Activated CD4-positive, alpha-beta T cell treated with anti-CD3 and anti-CD28 coated beads for 36 hours (primary cell): ENCODE measurements at regions of chr20 and their contacts with region 1.

Region 1: GRCh38 chr20:21615617-21616080 is 89.8 kb upstream of the PAX1 start:
- DNase-seq: peak; percentile 73
- ATAC-seq: peak; percentile 53
- H3K4me3 Mint-ChIP-seq: no peak overlapping the region
- H3K27ac Mint-ChIP-seq: no peak overlapping the region
- H3K4me1 Mint-ChIP-seq: no peaks in the 10 kb centered on the region
- H3K27me3 Mint-ChIP-seq: peaks cover 32% of the 10 kb centered on the region

Region 2: GRCh38 chr20:20837574-20838021 is 778.1 kb before region 1 on chr20:
- CTCF ChIA-PET with region 1: no interaction called
- POLR2A ChIA-PET with region 1: no interaction called
- intact Hi-C with region 1: loop called in 1 of 2 experiments (anchors 10 kb)
- DNase-seq: peak; percentile 74
- ATAC-seq: no peak
- H3K4me3 Mint-ChIP-seq: no peak overlapping the region
- H3K27ac Mint-ChIP-seq: no peak overlapping the region
- H3K4me1 Mint-ChIP-seq: peaks cover 3% of the 10 kb centered on the region
- H3K27me3 Mint-ChIP-seq: peaks cover 8% of the 10 kb centered on the region

Region 3: DNA sequence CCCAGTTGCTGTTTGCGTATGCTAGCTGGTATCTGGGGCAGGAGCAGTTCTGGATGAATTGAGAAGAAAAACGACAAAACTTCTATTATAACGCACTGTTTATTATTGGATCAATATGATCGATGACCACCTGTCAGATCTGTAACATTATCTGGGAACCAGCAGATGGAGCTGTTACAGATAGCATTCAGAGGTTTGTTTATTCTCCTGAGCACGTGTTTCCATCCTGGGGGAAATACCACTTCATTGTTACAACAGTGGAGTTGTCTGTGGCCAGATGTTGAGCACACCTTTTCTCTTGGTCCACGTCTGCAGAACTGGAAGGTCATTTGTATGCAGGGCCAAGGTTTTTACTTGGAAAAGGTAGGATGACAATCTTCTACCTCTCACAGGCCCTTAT is 85.8 kb before region 1 on chr20:
- CTCF ChIA-PET with region 1: interaction called, 10 read pairs
- POLR2A ChIA-PET with region 1: no interaction called
- intact Hi-C with region 1: loop called (anchors 1 kb)
- DNase-seq: no peak
- ATAC-seq: no peak
- H3K4me3 Mint-ChIP-seq: no peak overlapping the region
- H3K27ac Mint-ChIP-seq: no peak overlapping the region
- H3K4me1 Mint-ChIP-seq: peaks cover 2% of the 10 kb centered on the region
- H3K27me3 Mint-ChIP-seq: peaks cover 41% of the 10 kb centered on the region

Region 4: GRCh38 chr20:21559305-21559704 is 56.3 kb before region 1 on chr20:
- CTCF ChIA-PET with region 1: no interaction called
- POLR2A ChIA-PET with region 1: no interaction called
- intact Hi-C with region 1: no loop called
- DNase-seq: peak; percentile 58
- ATAC-seq: peak; percentile 70
- H3K4me3 Mint-ChIP-seq: peak overlapping the region; percentile 41
- H3K27ac Mint-ChIP-seq: no peak overlapping the region
- H3K4me1 Mint-ChIP-seq: peaks cover 46% of the 10 kb centered on the region
- H3K27me3 Mint-ChIP-seq: peaks cover 11% of the 10 kb centered on the region

Region 5: DNA sequence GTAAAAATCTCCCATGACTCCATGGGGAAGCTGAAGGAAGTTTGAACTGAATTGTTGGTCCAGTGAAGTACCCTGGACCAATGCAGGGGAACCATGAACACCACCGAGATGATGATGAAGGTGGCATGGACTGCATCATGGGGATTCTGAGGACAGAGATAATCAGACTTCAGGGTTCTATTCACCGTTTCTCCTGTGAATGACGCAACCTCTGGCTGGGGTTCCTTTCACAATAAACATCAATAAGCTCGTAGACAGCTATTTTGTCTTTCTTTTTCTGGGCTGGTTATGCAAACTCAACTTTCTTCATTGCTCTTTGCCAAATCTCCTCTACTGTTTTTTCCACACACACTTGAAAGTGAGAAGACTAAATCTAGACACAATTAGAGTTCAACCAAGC is 13.8 kb before region 1 on chr20:
- CTCF ChIA-PET with region 1: interaction called, 16 read pairs
- POLR2A ChIA-PET with region 1: no interaction called
- intact Hi-C with region 1: no loop called
- DNase-seq: no peak
- ATAC-seq: no peak
- H3K4me3 Mint-ChIP-seq: no peak overlapping the region
- H3K27ac Mint-ChIP-seq: no peak overlapping the region
- H3K4me1 Mint-ChIP-seq: no peaks in the 10 kb centered on the region
- H3K27me3 Mint-ChIP-seq: peaks cover 19% of the 10 kb centered on the region